Colonic mucosa (tissue), 4 donors: ENCODE measurements at regions of chr4 and their contacts with region 1.

Region 1: DNA sequence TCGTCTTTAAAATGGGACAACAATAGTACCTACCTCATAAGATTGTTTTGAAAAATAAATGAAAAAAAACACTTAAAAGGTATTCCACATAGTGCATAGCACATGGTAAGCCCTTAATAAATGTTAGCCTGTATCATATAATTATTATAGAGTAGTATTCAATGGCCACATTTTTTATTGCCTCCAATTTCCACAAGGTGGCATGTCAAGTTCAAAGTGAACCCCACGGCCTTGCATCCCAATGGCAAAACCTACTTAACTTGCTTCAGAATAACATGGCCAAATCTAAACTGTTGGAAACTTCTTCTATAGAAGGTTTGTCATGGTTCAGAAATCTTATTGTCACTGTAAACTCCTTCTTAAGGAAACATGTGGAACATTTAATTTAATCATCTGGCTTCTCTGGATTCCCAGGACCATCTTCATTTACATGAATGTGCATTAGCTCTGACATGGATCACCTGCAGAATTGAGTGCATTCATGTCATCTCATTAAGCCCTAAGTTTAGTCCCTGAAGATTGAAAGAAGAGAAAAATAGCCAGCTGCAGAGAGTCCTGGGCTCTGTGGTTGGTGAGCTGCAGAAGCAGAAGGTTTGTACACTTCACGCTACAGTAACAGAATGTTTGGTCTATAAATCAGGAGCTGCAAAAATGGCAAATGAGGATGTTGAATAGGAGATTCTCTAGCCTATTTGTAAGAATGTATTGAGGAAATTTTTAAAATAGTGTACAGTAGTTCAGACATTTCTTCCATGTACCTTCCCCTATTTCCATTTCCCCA is 61.0 kb downstream of the ANXA3 start:
- DNase-seq: peak; percentile 42
- H3K4me3 ChIP-seq: no peak overlapping the region
- H3K27ac ChIP-seq: no peak overlapping the region
- H3K4me1 ChIP-seq: no peaks in the 10 kb centered on the region
- H3K27me3 ChIP-seq: no peaks in the 10 kb centered on the region
- CTCF ChIP-seq: peak; percentile 62

Region 2: DNA sequence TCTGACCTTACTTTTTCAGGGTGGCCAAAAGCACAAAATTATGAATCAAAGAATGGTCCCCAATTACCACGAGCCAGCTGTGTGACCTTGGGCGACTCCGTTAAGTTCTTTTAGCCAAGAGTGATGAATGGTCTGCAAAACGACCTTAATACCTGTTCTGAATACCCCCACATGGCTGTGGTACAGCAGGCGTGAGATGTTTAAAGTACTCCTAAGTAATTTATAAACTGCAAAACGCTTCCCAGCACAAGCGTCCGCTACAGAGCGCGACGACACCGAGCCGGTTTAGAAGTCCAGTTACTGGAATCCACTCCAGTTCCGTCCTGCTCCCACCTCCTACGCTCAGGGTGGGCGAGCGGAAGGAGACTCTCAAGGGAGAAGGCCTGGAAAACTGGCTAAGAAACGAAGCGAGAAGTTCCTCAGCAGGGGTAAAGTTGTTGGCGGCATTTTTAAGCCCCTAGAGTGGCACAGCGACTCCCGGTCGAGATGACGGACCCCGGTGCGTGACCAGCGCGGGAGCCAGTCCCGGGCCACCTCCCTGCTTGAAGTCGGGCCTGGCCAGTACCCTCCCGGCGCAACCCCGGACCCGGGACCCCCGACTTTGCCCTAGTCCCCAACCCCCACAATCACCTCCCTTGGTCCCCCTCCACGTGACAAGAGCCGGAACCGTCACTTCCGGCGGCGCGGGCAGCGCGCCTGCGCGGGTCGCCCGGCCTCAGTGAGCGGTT is 162.9 kb after region 1 on chr4:
- intact Hi-C with region 1: loop called (anchors 10 kb)
- DNase-seq: peak; percentile 92
- H3K4me3 ChIP-seq: peak overlapping the region; percentile 76
- H3K27ac ChIP-seq: peak overlapping the region; percentile 96
- H3K4me1 ChIP-seq: peaks cover 4% of the 10 kb centered on the region
- H3K27me3 ChIP-seq: no peaks in the 10 kb centered on the region
- CTCF ChIP-seq: no peak

Region 3: DNA sequence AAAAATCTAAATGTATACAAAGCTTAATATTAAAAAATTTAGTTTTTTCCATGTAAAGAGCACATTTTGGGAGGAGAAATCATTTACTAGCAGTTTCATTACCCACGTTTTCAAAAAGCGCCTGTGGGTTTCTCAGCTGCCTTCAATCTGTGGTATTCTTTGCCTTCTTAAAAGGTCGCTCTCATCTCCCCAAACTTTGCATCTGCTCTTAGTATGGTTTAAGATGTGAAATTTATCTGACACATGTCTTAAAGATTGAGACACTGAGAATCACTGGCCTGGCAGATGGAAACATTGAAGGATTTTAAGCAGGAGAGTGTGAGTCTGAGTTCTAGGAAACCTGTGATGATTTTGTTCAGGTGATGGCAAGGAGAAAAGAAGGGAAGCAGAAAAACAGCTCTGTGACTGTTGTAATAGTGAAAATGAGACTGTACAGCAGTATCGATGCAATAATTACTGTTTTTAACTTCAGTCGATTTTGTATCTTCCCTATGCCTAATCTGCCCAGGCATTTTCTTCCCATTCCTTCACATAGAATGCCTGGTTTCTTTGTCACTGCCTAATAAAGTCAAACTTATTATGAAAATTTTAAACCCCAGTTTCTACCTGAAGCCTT is 250.8 kb after region 1 on chr4:
- intact Hi-C with region 1: loop called (anchors 2 kb)
- DNase-seq: no peak
- H3K4me3 ChIP-seq: no peak overlapping the region
- H3K27ac ChIP-seq: no peak overlapping the region
- H3K4me1 ChIP-seq: no peaks in the 10 kb centered on the region
- H3K27me3 ChIP-seq: no peaks in the 10 kb centered on the region
- CTCF ChIP-seq: no peak

Region 4: GRCh38 chr4:78880874-78881492 is 268.4 kb after region 1 on chr4:
- intact Hi-C with region 1: no loop called
- DNase-seq: no peak
- H3K4me3 ChIP-seq: no peak overlapping the region
- H3K27ac ChIP-seq: no peak overlapping the region
- H3K4me1 ChIP-seq: no peaks in the 10 kb centered on the region
- H3K27me3 ChIP-seq: no peaks in the 10 kb centered on the region
- CTCF ChIP-seq: no peak